WTC11 (cell line): ENCODE measurements at regions of chr5 and their contacts with region 1.

Region 1: DNA sequence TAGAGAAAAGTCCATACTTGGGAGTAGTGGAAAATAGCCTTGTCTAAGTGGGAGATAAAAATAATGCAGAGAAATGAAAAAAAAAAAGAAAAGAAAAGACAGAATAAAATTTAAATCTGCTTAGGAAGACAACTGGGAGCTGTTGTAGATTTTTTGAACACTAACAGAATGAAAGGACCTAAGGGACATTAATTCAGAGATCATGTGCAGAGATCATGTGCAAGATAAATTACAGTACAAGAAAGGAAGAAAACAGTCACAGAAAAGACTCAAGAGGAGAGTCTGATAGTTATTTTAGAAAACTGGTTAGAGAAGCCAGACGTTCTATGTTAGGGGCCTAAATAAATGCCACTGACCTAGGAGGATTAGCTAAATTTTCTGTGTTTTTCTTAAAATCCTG is 1226.8 kb upstream of the NUDT12 start:
- DNase-seq: no peak
- ATAC-seq: no peak
- H3K4me3 Mint-ChIP-seq: no peak overlapping the region
- H3K27ac Mint-ChIP-seq: no peak overlapping the region
- H3K4me1 Mint-ChIP-seq: peaks cover 7% of the 10 kb centered on the region
- H3K27me3 Mint-ChIP-seq: peaks cover 37% of the 10 kb centered on the region
- CTCF ChIP-seq: no peak

Region 2: DNA sequence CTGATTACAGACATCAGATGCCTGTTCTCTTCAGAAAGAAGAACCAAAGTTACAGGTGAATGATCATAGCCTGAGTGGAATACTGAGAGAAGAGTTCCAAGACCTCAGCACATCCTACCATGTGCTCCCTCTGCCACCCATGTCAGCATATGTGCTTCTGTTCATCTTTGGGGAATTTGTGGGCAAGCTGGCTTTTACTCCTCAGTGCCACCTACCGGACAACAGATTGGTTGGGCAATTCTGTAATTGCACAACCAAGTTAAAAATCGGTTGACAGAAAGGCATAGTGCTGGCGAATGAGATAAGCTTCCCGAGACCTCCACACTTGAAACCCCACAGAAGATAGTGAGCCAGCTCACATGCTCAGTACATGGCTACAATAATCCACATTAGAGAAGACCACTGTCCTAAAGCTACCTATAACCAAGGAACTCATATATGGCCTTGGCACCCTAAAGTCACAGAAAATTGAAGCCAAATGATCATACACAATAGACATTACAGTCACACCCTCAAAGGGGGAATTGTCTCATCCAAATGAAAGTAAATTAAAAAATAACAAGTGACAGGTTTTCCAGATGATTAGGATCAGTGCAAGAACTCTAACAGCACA is 11.2 kb after region 1 on chr5:
- CTCF ChIA-PET with region 1: interaction called, 11 read pairs
- POLR2A ChIA-PET with region 1: no interaction called
- DNase-seq: peak; percentile 31
- ATAC-seq: peak; percentile 83
- H3K4me3 Mint-ChIP-seq: no peak overlapping the region
- H3K27ac Mint-ChIP-seq: no peak overlapping the region
- H3K4me1 Mint-ChIP-seq: no peaks in the 10 kb centered on the region
- H3K27me3 Mint-ChIP-seq: peaks cover 5% of the 10 kb centered on the region
- CTCF ChIP-seq: peak; percentile 54; the same call in 1 of the 2 replicates